Transverse colon (tissue), 4 donors: ENCODE measurements at regions of chr11 and their contacts with region 1.

Region 1: GRCh38 chr11:6353367-6353987 is 33.2 kb upstream of the CAVIN3 start:
- DNase-seq: peak; percentile 55
- H3K4me3 ChIP-seq: no peak overlapping the region
- H3K27ac ChIP-seq: no peak overlapping the region
- H3K4me1 ChIP-seq: peaks cover 0 to 8% (median 0%) of the 10 kb centered on the region in 4 donors
- H3K27me3 ChIP-seq: no peaks in the 10 kb centered on the region
- CTCF ChIP-seq: peak; percentile 83 to 94 (median 87)
- EP300 ChIP-seq: no peak
- POLR2A ChIP-seq: no peak

Region 2: GRCh38 chr11:6229911-6230310 is 123.6 kb before region 1 on chr11:
- in situ Hi-C with region 1: no loop called
- intact Hi-C with region 1: no loop called
- DNase-seq: peak; percentile 80
- H3K4me3 ChIP-seq: peak overlapping the region in 3 of 4 donors; percentile 19 to 41 (median 29)
- H3K27ac ChIP-seq: peak overlapping the region; percentile 78 to 87 (median 82)
- H3K4me1 ChIP-seq: peaks cover 16 to 79% (median 41%) of the 10 kb centered on the region in 4 donors
- H3K27me3 ChIP-seq: no peaks in the 10 kb centered on the region
- CTCF ChIP-seq: no peak
- EP300 ChIP-seq: no peak
- POLR2A ChIP-seq: peak; percentile 84

Region 3: GRCh38 chr11:6251120-6251733 is 102.2 kb before region 1 on chr11:
- in situ Hi-C with region 1: no loop called
- intact Hi-C with region 1: loop called (anchors 5 kb)
- DNase-seq: peak; percentile 82
- H3K4me3 ChIP-seq: no peak overlapping the region
- H3K27ac ChIP-seq: peak overlapping the region; percentile 36 to 71 (median 46)
- H3K4me1 ChIP-seq: peaks cover 4 to 9% (median 6%) of the 10 kb centered on the region in 4 donors
- H3K27me3 ChIP-seq: peaks cover 8% of the 10 kb centered on the region
- CTCF ChIP-seq: peak; percentile 79 to 97 (median 90)
- EP300 ChIP-seq: no peak
- POLR2A ChIP-seq: no peak

Region 4: GRCh38 chr11:6307876-6308275 is 45.6 kb before region 1 on chr11:
- in situ Hi-C with region 1: no loop called
- intact Hi-C with region 1: loop called (anchors 2 kb)
- DNase-seq: no peak
- H3K4me3 ChIP-seq: no peak overlapping the region
- H3K27ac ChIP-seq: no peak overlapping the region
- H3K4me1 ChIP-seq: no peaks in the 10 kb centered on the region
- H3K27me3 ChIP-seq: peaks cover 14% of the 10 kb centered on the region
- CTCF ChIP-seq: no peak
- EP300 ChIP-seq: no peak
- POLR2A ChIP-seq: no peak

Region 5: DNA sequence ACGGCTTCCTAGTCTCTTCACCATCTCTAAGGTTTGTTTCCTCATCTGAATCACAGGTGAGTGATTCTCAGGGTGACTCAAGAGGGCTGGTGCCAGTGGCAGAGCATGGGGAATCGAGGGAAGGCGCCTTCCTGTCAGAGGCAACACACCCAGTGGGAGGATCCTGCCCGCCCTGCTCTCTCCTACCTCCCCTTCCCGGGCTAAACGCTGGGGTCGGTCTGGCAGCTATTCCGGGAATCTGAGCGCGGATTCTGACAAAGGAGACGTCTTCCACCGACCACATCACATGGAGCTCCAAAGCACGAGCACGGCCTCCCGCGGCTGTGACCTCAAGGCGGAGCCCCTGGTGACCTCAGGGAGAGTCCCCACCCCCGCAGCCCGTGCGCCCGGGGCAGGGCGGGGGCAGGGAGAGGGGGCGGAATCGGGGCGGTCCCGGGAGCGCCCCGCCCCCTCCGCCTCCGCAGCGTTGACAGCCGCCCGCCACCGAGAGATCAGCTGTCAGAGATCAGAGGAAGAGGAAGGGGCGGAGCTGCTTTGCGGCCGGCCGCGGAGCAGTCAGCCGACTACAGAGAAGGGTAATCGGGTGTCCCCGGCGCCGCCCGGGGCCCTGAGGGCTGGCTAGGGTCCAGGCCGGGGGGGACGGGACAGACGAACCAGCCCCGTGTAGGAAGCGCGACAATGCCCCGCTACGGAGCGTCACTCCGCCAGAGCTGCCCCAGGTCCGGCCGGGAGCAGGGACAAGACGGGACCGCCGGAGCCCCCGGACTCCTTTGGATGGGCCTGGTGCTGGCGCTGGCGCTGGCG is 36.6 kb after region 1 on chr11 and contains the start of gene SMPD1:
- in situ Hi-C with region 1: no loop called
- intact Hi-C with region 1: no loop called
- DNase-seq: peak; percentile 96
- H3K4me3 ChIP-seq: peak within 1 kb of the TSS; percentile 61 to 94 (median 82)
- H3K27ac ChIP-seq: peak within 1 kb of the TSS; percentile 85 to 96 (median 93)
- H3K4me1 ChIP-seq: peaks cover 6 to 39% (median 23%) of the 10 kb centered on the region in 4 donors
- H3K27me3 ChIP-seq: no peaks in the 10 kb centered on the region
- CTCF ChIP-seq: no peak
- EP300 ChIP-seq: no peak
- POLR2A ChIP-seq: peak; percentile 78
- total RNA-seq, gene SMPD1: 27.7 to 67.0 (median 43.2) TPM

Region 6: GRCh38 chr11:6443269-6444003 is 90.0 kb after region 1 on chr11:
- in situ Hi-C with region 1: no loop called
- intact Hi-C with region 1: no loop called
- DNase-seq: peak; percentile 61
- H3K4me3 ChIP-seq: no peak overlapping the region
- H3K27ac ChIP-seq: no peak overlapping the region
- H3K4me1 ChIP-seq: no peaks in the 10 kb centered on the region
- H3K27me3 ChIP-seq: no peaks in the 10 kb centered on the region
- CTCF ChIP-seq: peak; percentile 75 to 85 (median 82)
- EP300 ChIP-seq: no peak
- POLR2A ChIP-seq: no peak

Region 7: GRCh38 chr11:6468712-6469495 is 115.4 kb after region 1 on chr11:
- in situ Hi-C with region 1: no loop called
- intact Hi-C with region 1: no loop called
- DNase-seq: peak; percentile 76
- H3K4me3 ChIP-seq: no peak overlapping the region
- H3K27ac ChIP-seq: peak overlapping the region; percentile 62 to 73 (median 66)
- H3K4me1 ChIP-seq: peaks cover 20 to 44% (median 25%) of the 10 kb centered on the region in 4 donors
- H3K27me3 ChIP-seq: no peaks in the 10 kb centered on the region
- CTCF ChIP-seq: no peak
- EP300 ChIP-seq: no peak
- POLR2A ChIP-seq: no peak